Activated CD4-positive, alpha-beta memory T cell treated with anti-CD3 and anti-CD28 coated beads, Interleukin-2, amount 10 ng/mL, durations not matched to agents 7 days and 5 days (primary cell): ENCODE measurements at regions of chr15 and their contacts with region 1.

Region 1: DNA sequence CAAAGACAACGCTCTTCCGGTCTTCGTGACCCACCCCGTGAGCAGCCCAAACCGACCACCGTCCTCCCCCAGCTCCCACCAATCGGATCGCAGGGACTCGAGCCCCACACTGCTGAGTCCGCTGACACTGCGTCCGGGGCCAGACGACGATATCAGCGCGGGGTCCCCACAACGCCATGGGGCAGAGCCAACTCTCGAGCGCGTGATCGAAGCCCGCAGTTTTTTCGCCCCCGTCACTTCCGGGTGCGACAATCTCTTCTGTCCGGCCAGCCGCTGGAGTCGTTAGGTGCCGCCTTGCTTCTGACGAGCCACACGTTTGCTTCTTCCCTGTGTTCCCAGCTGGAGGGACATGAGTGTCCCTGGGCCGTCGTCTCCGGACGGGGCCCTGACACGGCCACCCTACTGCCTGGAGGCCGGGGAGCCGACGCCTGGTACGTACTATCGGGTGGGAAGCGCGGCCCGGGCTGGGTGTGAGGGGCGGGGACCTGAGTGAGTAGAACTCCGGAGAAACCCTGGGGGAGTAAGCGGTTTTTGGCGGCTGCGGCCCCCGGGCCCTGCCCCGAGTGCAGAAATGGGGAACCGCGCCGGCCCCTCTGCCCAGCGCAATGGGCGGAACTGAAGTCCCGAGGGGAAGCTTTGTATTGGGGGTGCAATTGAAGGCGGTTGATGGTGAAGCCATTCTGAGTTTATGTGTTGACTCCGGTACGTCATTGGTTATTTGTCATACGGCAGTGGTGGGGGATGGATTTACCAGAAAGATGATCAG is at the start of gene BLOC1S6:
- DNase-seq: peak; percentile 89
- H3K4me3 Mint-ChIP-seq: peak within 1 kb of the TSS; percentile 97
- H3K27ac Mint-ChIP-seq: peak within 1 kb of the TSS; percentile 97
- H3K4me1 Mint-ChIP-seq: peaks cover 38% of the 10 kb centered on the region
- H3K27me3 Mint-ChIP-seq: no peaks in the 10 kb centered on the region
- total RNA-seq, gene BLOC1S6: 39.3 to 43.1 TPM

Region 2: DNA sequence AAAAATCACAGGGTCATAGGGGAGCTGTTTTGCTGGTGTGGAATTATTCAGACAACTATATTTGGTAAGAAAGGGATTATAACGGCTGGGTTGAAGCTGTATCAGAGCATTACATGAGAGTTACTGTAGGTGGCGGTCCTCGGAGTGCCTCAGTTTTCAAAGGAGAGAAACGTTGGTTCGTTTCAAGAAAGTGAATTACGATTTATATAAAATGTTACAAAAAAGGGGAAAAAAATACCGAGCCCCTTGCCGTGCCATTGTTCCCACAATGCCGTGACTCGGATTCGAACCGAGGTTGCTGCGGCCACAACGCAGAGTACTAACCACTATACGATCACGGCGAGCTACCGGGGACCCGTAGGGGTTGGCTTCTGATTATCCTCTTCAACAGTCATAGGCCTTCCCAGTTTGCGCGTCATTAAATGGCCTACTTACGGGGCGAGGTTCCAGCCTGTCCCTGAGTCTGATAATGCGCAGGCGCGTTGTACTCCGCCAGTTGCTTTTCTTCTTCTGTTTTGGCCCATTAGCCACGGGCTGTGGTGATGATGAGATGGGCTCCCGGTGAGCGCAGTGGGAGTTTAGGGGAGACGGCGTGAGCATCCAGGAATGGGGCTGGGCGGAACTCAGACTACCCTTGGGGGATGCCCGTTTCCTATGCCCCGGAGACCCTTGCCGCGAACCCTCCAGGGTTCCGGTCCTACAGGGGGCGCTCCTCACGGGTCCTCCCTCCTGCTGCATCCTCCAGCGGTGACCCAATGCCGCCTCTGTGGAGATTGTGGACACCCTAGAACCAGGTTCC is 388.7 kb before region 1 on chr15:
- CTCF ChIA-PET with region 1: no interaction called
- POLR2A ChIA-PET with region 1: interaction called, 13 read pairs
- DNase-seq: peak; percentile 96
- H3K4me3 Mint-ChIP-seq: no peak overlapping the region
- H3K27ac Mint-ChIP-seq: no peak overlapping the region
- H3K4me1 Mint-ChIP-seq: peaks cover 19% of the 10 kb centered on the region
- H3K27me3 Mint-ChIP-seq: peaks cover 2% of the 10 kb centered on the region

Region 3: GRCh38 chr15:45573961-45574629 is 13.2 kb before region 1 on chr15:
- CTCF ChIA-PET with region 1: interaction called, 7 read pairs
- POLR2A ChIA-PET with region 1: interaction called, 14 read pairs
- DNase-seq: peak; percentile 18
- H3K4me3 Mint-ChIP-seq: no peak overlapping the region
- H3K27ac Mint-ChIP-seq: no peak overlapping the region
- H3K4me1 Mint-ChIP-seq: no peaks in the 10 kb centered on the region
- H3K27me3 Mint-ChIP-seq: peaks cover 37% of the 10 kb centered on the region

Region 4: GRCh38 chr15:45611305-45611704 is 24.0 kb after region 1 on chr15:
- CTCF ChIA-PET with region 1: interaction called, 18 read pairs
- POLR2A ChIA-PET with region 1: interaction called, 23 read pairs
- DNase-seq: no peak
- H3K4me3 Mint-ChIP-seq: no peak overlapping the region
- H3K27ac Mint-ChIP-seq: no peak overlapping the region
- H3K4me1 Mint-ChIP-seq: peaks cover 19% of the 10 kb centered on the region
- H3K27me3 Mint-ChIP-seq: no peaks in the 10 kb centered on the region

Region 5: DNA sequence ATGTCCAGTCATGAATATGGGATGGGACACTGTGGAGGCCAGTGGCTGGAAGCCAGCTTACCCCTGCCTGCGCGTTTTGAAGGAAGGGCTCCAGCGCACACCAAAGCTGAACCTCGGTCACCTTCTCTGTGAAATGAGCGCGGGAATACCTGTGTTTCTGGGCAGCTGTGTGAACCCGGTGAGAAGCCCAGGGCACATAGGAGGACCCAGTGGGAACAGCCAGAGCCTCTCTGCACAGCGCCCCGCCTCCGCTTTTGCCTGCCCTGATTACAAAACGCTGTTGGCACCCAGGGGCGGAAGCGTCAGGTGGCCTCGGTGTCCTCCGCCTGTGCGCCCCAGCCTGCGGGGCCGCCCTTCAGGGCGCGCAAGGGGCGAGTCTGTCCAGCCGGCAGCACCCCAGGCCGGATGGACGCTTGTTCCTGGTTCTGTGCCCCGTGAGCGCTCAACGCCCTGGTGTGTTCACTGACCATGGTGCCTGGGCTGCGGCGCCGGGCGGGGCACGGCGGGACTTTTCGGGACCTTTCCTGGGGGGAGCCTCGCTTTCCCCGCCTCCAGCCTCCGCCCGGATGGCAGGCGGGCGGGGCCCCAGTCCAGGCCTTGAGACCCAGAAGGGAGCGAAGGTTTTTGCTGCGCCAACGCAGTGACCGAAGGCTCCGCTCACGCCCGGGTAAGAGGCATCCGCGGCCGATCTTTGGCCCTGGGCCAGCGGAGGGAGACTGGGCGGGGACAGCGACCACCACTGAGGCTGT is 47.3 kb after region 1 on chr15 and contains the start of gene SQOR:
- CTCF ChIA-PET with region 1: interaction called, 6 read pairs
- POLR2A ChIA-PET with region 1: interaction called, 48 read pairs
- DNase-seq: peak; percentile 82
- H3K4me3 Mint-ChIP-seq: peak within 1 kb of the TSS; percentile 99
- H3K27ac Mint-ChIP-seq: peak within 1 kb of the TSS; percentile 92
- H3K4me1 Mint-ChIP-seq: peaks cover 50% of the 10 kb centered on the region
- H3K27me3 Mint-ChIP-seq: no peaks in the 10 kb centered on the region
- total RNA-seq, gene SQOR: 139 to 142 TPM